ENCODE measurements at regions of chr6 and their contacts with region 1.

Region 1: DNA sequence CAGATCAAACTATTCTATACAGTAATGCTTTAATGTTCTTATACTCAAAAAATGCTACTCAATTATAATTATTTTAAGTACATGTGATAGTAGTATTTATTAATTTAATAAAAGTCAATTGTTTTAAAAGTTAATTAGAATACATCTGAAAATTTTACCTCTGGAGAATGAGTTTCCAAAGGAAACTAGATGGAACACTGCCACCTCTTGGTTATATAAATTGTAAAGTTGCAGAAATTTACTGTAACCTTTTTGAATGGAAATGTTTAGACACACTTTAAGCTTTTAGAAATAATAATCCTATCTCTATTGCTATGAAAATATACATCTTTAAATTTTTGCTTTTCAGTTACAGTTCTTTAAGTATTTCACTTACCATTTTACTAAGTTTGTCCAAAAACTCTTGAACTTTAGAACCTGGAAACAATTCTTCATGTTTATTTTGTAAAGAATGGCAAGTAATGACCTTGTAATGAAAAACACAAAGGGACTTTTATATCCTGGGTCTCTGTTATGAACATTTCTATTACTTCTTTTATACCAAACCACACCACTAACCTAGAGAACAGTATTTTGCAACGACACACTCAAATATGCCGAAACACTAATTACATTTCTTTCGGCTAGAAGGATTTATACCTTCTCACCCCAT is 10.9 kb upstream of the BMP5 start:
- DNase-seq: no peak
- ATAC-seq: no peak

Region 2: DNA sequence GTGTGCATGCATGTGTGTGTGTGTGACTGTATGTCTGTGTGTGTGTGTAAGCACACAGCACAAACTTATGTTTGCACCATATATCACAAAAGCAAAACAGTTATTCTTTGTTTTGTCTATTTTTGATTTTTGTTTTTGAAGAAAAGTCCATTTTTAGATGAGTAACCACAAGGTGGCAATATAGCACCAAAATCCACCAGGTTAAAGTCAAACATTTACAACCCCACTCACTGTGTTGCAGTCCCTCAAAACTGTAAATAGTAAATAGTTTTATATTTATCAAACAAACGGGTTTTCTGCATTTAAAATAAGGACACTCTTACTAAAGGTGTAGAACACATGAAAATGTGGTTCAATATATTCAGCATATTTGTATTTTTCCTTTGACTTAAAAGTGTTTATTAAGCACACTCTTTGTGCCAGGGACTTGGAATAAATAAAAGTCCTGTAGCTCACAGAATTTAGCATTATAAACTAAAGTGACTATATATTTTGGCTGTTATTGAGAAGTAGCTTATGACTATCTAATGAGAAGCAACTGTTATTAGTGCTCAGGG is 440.6 kb before region 1 on chr6:
- intact Hi-C with region 1: loop called in 1 of 2 experiments (anchors 5 kb)
- DNase-seq: no peak
- ATAC-seq: no peak

Region 3: GRCh38 chr6:55617272-55617671 is 269.0 kb before region 1 on chr6:
- intact Hi-C with region 1: loop called in 1 of 2 experiments (anchors 5 kb)
- DNase-seq: no peak
- ATAC-seq: peak; percentile 37 to 47

Region 4: GRCh38 chr6:55937261-55937947 is 51.1 kb after region 1 on chr6:
- intact Hi-C with region 1: no loop called
- DNase-seq: no peak
- ATAC-seq: no peak

Measured in left cardiac atrium (tissue), 4 donors.